Activated CD8-positive, alpha-beta T cell treated with anti-CD3 and anti-CD28 coated beads for 36 hours (primary cell): ENCODE measurements at regions of chr1 and their contacts with region 1.

Region 1: GRCh38 chr1:117674521-117675397 is 68.9 kb downstream of the TENT5C start:
- DNase-seq: peak; percentile 72
- ATAC-seq: peak; percentile 76
- H3K4me3 Mint-ChIP-seq: no peak overlapping the region
- H3K27ac Mint-ChIP-seq: no peak overlapping the region
- H3K4me1 Mint-ChIP-seq: peaks cover 12% of the 10 kb centered on the region
- H3K27me3 Mint-ChIP-seq: peaks cover 28% of the 10 kb centered on the region
- CTCF ChIP-seq: peak; percentile 46

Region 2: GRCh38 chr1:117512743-117513321 is 161.9 kb before region 1 on chr1:
- CTCF ChIA-PET with region 1: interaction called, 15 read pairs
- POLR2A ChIA-PET with region 1: no interaction called
- intact Hi-C with region 1: no loop called
- DNase-seq: no peak
- ATAC-seq: no peak
- H3K4me3 Mint-ChIP-seq: no peak overlapping the region
- H3K27ac Mint-ChIP-seq: no peak overlapping the region
- H3K4me1 Mint-ChIP-seq: no peaks in the 10 kb centered on the region
- H3K27me3 Mint-ChIP-seq: no peaks in the 10 kb centered on the region
- CTCF ChIP-seq: peak; percentile 65

Region 3: GRCh38 chr1:117527566-117528102 is 147.1 kb before region 1 on chr1:
- CTCF ChIA-PET with region 1: interaction called, 79 read pairs
- POLR2A ChIA-PET with region 1: no interaction called
- intact Hi-C with region 1: no loop called
- DNase-seq: no peak
- ATAC-seq: peak; percentile 57
- H3K4me3 Mint-ChIP-seq: no peak overlapping the region
- H3K27ac Mint-ChIP-seq: no peak overlapping the region
- H3K4me1 Mint-ChIP-seq: peaks cover 31% of the 10 kb centered on the region
- H3K27me3 Mint-ChIP-seq: no peaks in the 10 kb centered on the region
- CTCF ChIP-seq: no peak

Region 4: GRCh38 chr1:117541003-117541402 is 133.8 kb before region 1 on chr1:
- CTCF ChIA-PET with region 1: interaction called, 79 read pairs
- POLR2A ChIA-PET with region 1: interaction called, 3 read pairs
- intact Hi-C with region 1: loop called (anchors 5 kb)
- DNase-seq: no peak
- ATAC-seq: peak; percentile 14
- H3K4me3 Mint-ChIP-seq: no peak overlapping the region
- H3K27ac Mint-ChIP-seq: peak overlapping the region; percentile 12
- H3K4me1 Mint-ChIP-seq: peaks cover 18% of the 10 kb centered on the region
- H3K27me3 Mint-ChIP-seq: no peaks in the 10 kb centered on the region
- CTCF ChIP-seq: no peak

Region 5: GRCh38 chr1:117627546-117628130 is 47.1 kb before region 1 on chr1:
- CTCF ChIA-PET with region 1: interaction called, 10 read pairs
- POLR2A ChIA-PET with region 1: interaction called, 3 read pairs
- intact Hi-C with region 1: no loop called
- DNase-seq: no peak
- ATAC-seq: no peak
- H3K4me3 Mint-ChIP-seq: no peak overlapping the region
- H3K27ac Mint-ChIP-seq: no peak overlapping the region
- H3K4me1 Mint-ChIP-seq: peaks cover 12% of the 10 kb centered on the region
- H3K27me3 Mint-ChIP-seq: peaks cover 16% of the 10 kb centered on the region
- CTCF ChIP-seq: no peak

Region 6: GRCh38 chr1:117654493-117655219 is 20.1 kb before region 1 on chr1:
- CTCF ChIA-PET with region 1: interaction called, 40 read pairs
- POLR2A ChIA-PET with region 1: interaction called, 4 read pairs
- intact Hi-C with region 1: no loop called
- DNase-seq: peak; percentile 35
- ATAC-seq: peak; percentile 54
- H3K4me3 Mint-ChIP-seq: no peak overlapping the region
- H3K27ac Mint-ChIP-seq: peak overlapping the region; percentile 60
- H3K4me1 Mint-ChIP-seq: peaks cover 76% of the 10 kb centered on the region
- H3K27me3 Mint-ChIP-seq: peaks cover 31% of the 10 kb centered on the region
- CTCF ChIP-seq: no peak